ENCODE measurements at regions of chr11 and their contacts with region 1.

Region 1: DNA sequence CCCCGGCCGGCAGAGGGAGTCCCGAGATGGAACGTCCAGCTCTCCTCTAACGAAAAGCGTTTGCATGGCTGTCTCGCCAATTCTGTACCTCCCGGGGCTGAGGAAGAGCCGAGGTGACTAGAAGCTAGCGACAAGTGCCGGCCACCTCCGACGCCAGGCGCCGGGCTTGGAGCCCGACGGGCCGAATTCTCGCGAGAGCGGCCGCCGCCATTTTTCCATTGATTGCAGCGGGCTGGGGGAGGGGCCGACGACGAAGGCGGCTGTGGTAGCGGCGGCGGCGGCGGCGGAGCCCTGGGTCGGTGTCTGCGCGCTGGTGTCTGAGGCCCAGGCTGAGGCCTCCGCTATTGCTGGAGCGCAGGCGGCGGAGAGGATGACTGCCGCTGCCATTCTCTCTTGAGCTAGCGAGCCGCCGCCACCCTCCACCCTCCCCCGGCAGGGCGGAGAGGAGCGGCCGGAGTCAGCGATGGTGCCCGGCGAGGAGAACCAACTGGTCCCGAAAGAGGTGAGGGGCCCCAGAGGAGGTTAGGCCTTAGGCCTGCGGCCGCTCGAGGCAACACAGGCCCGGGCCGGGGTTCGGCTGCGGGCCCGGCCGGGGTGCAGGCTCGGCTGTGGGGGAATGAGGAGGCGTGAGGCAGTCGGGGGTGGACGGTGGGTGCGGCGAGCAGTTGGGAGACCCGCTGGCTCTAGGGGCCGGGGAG is at the start of gene USP47:
- DNase-seq: peak; percentile 94
- ATAC-seq: peak; percentile 81
- H3K4me3 Mint-ChIP-seq: no peak within 1 kb of the TSS
- H3K27ac Mint-ChIP-seq: no peak within 1 kb of the TSS
- H3K4me1 Mint-ChIP-seq: peaks cover 27% of the 10 kb centered on the region
- H3K27me3 Mint-ChIP-seq: peaks cover 3% of the 10 kb centered on the region
- CTCF ChIP-seq: no peak
- total RNA-seq, gene USP47: 48.5 and 50.3 TPM in 2 replicates

Region 2: GRCh38 chr11:11826260-11826659 is 15.6 kb before region 1 on chr11:
- CTCF ChIA-PET with region 1: no interaction called
- POLR2A ChIA-PET with region 1: no interaction called
- intact Hi-C with region 1: no loop called
- DNase-seq: no peak
- ATAC-seq: no peak
- H3K4me3 Mint-ChIP-seq: no peak overlapping the region
- H3K27ac Mint-ChIP-seq: no peak overlapping the region
- H3K4me1 Mint-ChIP-seq: no peaks in the 10 kb centered on the region
- H3K27me3 Mint-ChIP-seq: peaks cover 2% of the 10 kb centered on the region
- CTCF ChIP-seq: no peak

Region 3: GRCh38 chr11:11860103-11860979 is 18.5 kb after region 1 on chr11:
- CTCF ChIA-PET with region 1: no interaction called
- POLR2A ChIA-PET with region 1: no interaction called
- intact Hi-C with region 1: loop called (anchors 2 kb)
- DNase-seq: no peak
- ATAC-seq: no peak
- H3K4me3 Mint-ChIP-seq: no peak overlapping the region
- H3K27ac Mint-ChIP-seq: no peak overlapping the region
- H3K4me1 Mint-ChIP-seq: peaks cover 57% of the 10 kb centered on the region
- H3K27me3 Mint-ChIP-seq: no peaks in the 10 kb centered on the region
- CTCF ChIP-seq: no peak

Region 4: GRCh38 chr11:11884774-11885481 is 43.1 kb after region 1 on chr11:
- CTCF ChIA-PET with region 1: no interaction called
- POLR2A ChIA-PET with region 1: no interaction called
- intact Hi-C with region 1: loop called (anchors 2 kb)
- DNase-seq: no peak
- ATAC-seq: peak; percentile 50
- H3K4me3 Mint-ChIP-seq: no peak overlapping the region
- H3K27ac Mint-ChIP-seq: peak overlapping the region; percentile 67
- H3K4me1 Mint-ChIP-seq: peaks cover 18% of the 10 kb centered on the region
- H3K27me3 Mint-ChIP-seq: no peaks in the 10 kb centered on the region
- CTCF ChIP-seq: no peak

Region 5: GRCh38 chr11:12200279-12201010 is 358.6 kb after region 1 on chr11:
- CTCF ChIA-PET with region 1: no interaction called
- POLR2A ChIA-PET with region 1: no interaction called
- intact Hi-C with region 1: no loop called
- DNase-seq: no peak
- ATAC-seq: no peak
- H3K4me3 Mint-ChIP-seq: no peak overlapping the region
- H3K27ac Mint-ChIP-seq: no peak overlapping the region
- H3K4me1 Mint-ChIP-seq: no peaks in the 10 kb centered on the region
- H3K27me3 Mint-ChIP-seq: no peaks in the 10 kb centered on the region
- CTCF ChIP-seq: no peak